Sigmoid colon (tissue), 7 donors: ENCODE measurements at regions of chr2 and their contacts with region 1.

Region 1: GRCh38 chr2:198309673-198310280 is 505.4 kb downstream of the PLCL1 start:
- DNase-seq: no peak
- H3K4me3 ChIP-seq: no peak overlapping the region
- H3K27ac ChIP-seq: no peak overlapping the region
- H3K4me1 ChIP-seq: no peaks in the 10 kb centered on the region
- H3K27me3 ChIP-seq: no peaks in the 10 kb centered on the region
- CTCF ChIP-seq: peak in 3 of 4 experiments; percentile 56 to 84 (median 58)
- EP300 ChIP-seq: no peak
- POLR2A ChIP-seq: no peak

Region 2: DNA sequence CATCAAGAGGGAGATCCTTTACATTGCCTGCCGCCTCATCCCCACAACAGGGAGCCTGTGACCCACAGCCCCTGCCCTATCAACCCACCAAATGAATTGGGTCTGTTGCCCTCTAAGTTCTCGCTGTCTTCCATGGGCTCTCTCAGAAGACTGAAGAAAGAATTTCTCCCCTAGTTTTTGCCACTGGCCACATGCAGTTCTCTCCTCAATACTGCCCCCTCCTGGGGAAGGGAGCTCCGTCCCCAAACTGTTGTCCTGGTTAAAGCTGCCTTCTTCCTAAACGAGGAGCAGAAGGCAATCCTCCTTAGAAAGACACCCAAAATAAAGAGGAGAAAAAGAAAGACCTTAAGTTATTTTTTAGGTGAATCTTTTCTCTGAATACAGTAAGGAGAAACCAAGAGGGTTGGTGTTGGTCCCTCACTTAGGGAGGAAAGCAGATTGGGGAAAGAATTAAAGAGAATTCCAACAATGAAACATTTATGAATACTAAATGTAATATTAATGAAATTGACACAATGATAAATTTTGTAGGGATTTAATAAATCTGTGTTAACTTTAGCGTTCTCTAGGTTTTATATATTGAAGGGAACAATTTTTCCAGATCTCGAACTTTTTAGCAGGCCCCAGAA is 1179.1 kb after region 1 on chr2:
- intact Hi-C with region 1: loop called (anchors 10 kb)
- DNase-seq: no peak
- H3K4me3 ChIP-seq: no peak overlapping the region
- H3K27ac ChIP-seq: no peak overlapping the region
- H3K4me1 ChIP-seq: no peaks in the 10 kb centered on the region
- H3K27me3 ChIP-seq: peaks cover 0 to 10% (median 0%) of the 10 kb centered on the region in 3 donors
- CTCF ChIP-seq: peak in 2 of 4 experiments; percentile 12 to 35
- EP300 ChIP-seq: no peak
- POLR2A ChIP-seq: no peak